ENCODE measurements at regions of chr12 and their contacts with region 1.

Region 1: DNA sequence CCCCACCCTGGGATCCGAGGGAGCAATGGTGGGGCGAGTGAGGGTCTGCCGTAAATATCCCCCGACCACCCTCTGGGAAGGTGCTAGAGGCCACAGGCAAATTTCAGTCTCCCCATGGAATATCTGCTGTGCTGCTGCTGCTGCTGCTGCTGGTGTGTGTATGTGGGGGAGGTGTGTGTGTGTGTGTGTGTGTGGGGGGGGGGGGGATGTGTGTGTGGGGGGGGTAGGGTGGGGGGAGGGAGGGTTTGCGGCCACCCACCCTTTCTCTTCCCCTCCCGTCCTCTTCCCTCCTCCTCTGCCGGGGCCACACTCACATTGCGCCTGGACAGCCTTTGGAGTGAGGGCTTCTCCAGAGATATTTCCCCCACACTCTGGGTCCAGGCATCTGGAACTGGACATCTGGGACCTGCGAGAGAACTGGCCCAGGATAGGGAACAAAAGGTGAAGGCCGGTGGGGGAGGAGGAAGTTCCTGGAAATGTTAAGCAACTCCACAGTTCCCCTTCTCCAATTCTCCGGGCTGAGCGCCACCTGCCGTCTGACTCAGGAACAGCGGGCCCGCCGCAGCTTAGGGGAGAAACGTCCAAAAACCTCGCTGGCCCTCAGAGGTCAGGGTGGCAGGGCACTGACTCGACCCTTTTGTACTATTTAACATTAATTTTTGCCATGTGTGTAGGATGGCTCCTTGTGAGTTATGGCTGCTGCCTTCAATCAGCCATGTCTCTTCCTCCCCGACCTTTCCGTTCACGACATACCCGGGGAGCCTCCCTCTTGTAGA is at the start of gene C1RL:
- DNase-seq: peak; percentile 72
- H3K4me3 ChIP-seq: peak within 1 kb of the TSS; percentile 65
- H3K27ac ChIP-seq: no peak within 1 kb of the TSS
- H3K4me1 ChIP-seq: peaks cover 10% of the 10 kb centered on the region
- CTCF ChIP-seq: peak; percentile 91
- total RNA-seq, gene C1RL: 2.9 and 3.0 TPM in 2 replicates

Region 2: GRCh38 chr12:5442251-5443006 is 1666.6 kb before region 1 on chr12:
- CTCF ChIA-PET with region 1: no interaction called
- POLR2A ChIA-PET with region 1: no interaction called
- intact Hi-C with region 1: loop called (anchors 10 kb)
- DNase-seq: peak; percentile 42
- H3K4me3 ChIP-seq: no peak overlapping the region
- H3K27ac ChIP-seq: no peak overlapping the region
- H3K4me1 ChIP-seq: peaks cover 80% of the 10 kb centered on the region
- CTCF ChIP-seq: peak; percentile 73

Region 3: DNA sequence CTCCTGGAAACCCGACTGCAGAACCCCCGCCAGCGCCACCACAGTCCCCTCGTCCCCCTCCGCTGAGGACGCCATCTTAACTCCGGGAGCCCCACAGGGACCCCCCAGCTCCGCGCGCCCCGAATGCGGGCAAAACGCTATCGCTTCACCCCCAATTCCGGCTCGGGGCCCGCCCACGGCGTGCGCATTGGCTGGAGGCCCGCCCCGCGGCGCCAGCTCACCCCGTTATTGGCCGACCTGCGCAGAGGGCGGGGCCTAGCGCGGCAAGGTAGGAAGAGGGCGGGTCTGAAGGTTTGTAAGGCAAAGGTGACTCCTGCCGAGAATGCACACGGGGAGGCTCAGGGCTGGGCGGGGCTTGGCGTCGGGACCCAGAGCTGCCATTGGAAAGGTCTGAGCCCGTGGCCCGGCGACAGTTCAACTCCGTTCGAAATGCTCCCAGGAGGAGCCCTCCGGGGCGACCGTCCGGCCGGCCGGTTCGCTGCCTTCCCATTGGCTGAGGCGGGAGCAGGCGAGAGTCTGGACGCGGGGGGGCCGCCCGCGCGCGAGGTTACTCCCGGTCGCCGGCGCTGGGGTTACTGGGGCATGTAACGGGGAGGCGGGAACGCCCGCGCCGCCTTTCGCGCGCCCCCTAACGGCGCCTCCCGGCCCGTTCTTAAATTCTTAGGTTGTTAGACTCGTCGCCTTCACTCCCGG is 90.5 kb before region 1 on chr12 and contains the start of gene LPCAT3:
- CTCF ChIA-PET with region 1: no interaction called
- POLR2A ChIA-PET with region 1: interaction called, 3 read pairs
- intact Hi-C with region 1: loop called (anchors 5 kb)
- DNase-seq: peak; percentile 97
- H3K4me3 ChIP-seq: peak within 1 kb of the TSS; percentile 82
- H3K27ac ChIP-seq: peak within 1 kb of the TSS; percentile 78
- H3K4me1 ChIP-seq: peaks cover 26% of the 10 kb centered on the region
- CTCF ChIP-seq: peak; percentile 83
- total RNA-seq, gene LPCAT3: 11.6 and 17.4 TPM in 2 replicates

Region 4: GRCh38 chr12:7092229-7092985 is 16.6 kb before region 1 on chr12 and contains the start of gene C1R:
- CTCF ChIA-PET with region 1: interaction called, 4 read pairs
- POLR2A ChIA-PET with region 1: interaction called, 4 read pairs
- intact Hi-C with region 1: loop called (anchors 2 kb)
- DNase-seq: peak; percentile 59
- H3K4me3 ChIP-seq: no peak within 1 kb of the TSS
- H3K27ac ChIP-seq: no peak within 1 kb of the TSS
- H3K4me1 ChIP-seq: peaks cover 3% of the 10 kb centered on the region
- CTCF ChIP-seq: peak; percentile 87
- total RNA-seq, gene C1R: not detected in 2 replicates

Region 5: DNA sequence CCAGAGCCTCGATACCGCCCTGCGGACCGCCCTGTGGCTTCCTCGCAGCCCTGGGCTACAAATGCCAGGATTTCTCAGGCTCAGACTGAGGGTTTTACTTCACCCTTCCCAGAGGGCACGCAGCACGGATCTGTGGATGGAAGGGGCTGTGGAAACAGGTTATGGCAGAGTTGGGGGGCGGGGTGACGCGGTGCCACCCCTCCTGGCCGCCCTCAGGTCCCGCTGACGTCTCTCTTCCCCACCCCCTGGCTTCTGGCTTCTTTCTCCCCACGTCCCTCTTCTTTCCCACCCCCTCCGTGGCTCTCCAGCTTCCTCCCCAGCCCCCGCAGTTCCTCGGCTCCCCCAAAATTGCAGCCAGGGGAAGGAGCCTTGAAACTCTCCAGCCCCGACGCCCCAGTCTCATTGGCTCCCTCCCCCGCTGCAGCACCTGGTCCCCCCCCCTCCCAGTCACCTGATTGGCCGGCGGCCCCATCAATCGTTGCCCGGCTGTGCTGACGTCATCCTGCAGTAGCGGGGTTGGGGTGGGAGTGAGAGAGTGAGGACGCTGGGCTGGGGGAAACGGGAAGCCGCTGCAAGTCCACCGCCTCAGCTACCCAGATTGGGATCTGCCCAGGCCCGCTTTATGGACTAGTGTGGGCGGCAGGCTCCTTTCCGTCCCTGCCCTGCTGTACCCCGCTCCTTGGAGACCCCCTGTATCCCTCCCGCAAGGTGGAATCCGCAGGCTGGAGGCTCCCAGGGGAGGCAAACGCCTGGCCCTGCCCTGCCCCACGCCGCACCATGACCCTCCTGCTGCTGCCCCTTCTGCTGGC is 21.1 kb after region 1 on chr12 and contains the start of gene CLSTN3:
- CTCF ChIA-PET with region 1: no interaction called
- POLR2A ChIA-PET with region 1: no interaction called
- intact Hi-C with region 1: no loop called
- DNase-seq: peak; percentile 88
- H3K4me3 ChIP-seq: peak within 1 kb of the TSS; percentile 79
- H3K27ac ChIP-seq: no peak within 1 kb of the TSS
- H3K4me1 ChIP-seq: peaks cover 20% of the 10 kb centered on the region
- CTCF ChIP-seq: no peak
- total RNA-seq, gene CLSTN3: 17.9 and 34.2 TPM in 2 replicates